Posterior vena cava (tissue), 2 donors: ENCODE measurements at regions of chr20 and their contacts with region 1.

Region 1: GRCh38 chr20:23205611-23206041 is 119.5 kb upstream of the CD93 start:
- DNase-seq: peak; percentile 88

Region 2: DNA sequence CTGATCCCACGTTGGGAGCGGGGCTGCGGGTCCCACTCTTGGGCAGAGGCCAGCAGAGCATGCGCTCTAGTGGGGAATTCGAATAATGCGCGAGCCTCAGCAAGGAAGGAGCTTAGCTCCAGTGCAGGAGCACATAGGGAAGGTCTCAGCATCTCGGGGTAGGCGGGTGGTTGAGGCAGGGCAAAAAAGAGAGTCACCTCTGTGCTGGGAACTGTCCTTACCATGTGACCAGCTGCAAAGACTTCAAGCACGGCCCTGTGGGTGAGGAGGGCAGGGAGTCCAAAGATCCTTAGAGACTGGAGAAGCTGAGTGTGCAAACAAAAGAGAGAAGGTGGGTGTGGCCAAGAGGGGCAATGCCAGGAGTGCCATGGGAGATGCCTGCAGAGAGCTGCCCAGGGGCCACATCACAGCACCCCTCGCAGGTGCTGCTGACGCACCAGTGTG is 40.3 kb before region 1 on chr20:
- intact Hi-C with region 1: loop called in 1 of 2 experiments (anchors 5 kb)
- DNase-seq: no peak